ENCODE measurements at regions of chr6 and their contacts with region 1.

Region 1: DNA sequence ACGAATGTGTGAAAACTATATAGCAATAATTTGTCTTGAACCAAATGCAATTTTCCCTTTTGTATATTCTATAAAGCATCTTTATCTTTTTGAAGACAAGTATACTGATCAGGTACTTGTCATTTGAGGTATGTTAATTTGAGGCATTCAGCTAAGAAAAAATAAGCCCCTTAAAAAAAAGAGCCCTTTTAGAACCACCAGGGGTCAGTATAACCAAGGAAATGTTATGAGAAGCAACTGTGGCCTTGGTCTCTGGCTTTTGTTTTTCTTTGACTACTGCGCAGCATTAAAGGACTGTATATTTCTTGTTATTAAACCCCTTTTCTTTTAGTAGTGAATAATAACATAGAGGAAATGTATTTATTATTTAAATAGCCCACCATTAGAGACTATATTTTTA is 43.1 kb downstream of the CD109 start:
- DNase-seq: peak; percentile 54
- H3K4me3 ChIP-seq: no peak overlapping the region
- H3K27ac ChIP-seq: no peak overlapping the region
- H3K27me3 ChIP-seq: no peaks in the 10 kb centered on the region
- CTCF ChIP-seq: peak; percentile 73

Region 2: GRCh38 chr6:73854998-73855718 is 116.1 kb after region 1 on chr6:
- CTCF ChIA-PET with region 1: interaction called, 18 read pairs
- POLR2A ChIA-PET with region 1: no interaction called
- DNase-seq: peak; percentile 48
- H3K4me3 ChIP-seq: no peak overlapping the region
- H3K27ac ChIP-seq: no peak overlapping the region
- H3K27me3 ChIP-seq: no peaks in the 10 kb centered on the region
- CTCF ChIP-seq: peak; percentile 73

Measured in AG04450 (cell line).